Activated naive CD4-positive, alpha-beta T cell treated with anti-CD3 and anti-CD28 coated beads for 36 hours (primary cell): ENCODE measurements at regions of chr4 and their contacts with region 1.

Region 1: DNA sequence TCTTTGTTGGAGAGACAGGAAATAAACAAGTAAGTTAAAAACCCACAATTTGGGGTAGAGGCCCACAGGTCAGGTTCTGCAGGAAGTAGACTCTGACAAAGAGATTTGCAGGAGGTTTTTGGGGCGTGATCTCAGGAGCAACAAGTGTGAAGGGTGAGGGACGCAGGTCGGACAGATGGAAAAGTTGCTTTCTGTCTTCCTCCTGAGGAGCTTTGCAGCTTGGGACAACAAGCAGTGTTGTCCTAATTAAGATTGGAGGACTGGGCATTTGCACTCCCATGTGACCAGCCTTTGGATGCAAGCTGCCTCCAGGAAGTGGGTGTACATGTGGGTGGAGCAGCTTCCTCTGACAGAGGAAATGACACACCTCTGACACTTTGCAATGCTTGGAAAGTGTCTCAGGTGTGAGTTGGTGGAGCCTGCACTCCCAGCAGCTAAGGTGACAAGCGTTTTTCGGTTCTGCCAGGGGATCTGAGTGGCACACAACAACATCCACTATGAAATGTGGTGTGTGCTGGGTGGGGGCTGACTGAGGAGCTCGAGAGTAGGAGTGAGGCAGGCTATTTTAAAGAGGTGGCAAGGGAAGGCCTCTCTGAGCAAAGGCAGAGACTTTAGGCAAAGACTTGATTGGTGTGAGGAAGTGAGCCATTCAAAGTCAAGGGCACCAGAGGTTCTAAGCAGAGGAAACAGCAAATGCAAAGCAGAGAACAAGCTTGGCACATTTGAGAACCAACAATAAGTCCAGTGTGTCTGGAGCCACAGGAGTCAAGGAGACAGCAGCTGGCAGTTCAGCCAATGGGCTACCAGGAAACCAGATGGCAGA is 339.8 kb upstream of the GATB start:
- DNase-seq: peak; percentile 92
- H3K4me3 Mint-ChIP-seq: peak overlapping the region; percentile 71
- H3K27ac Mint-ChIP-seq: peak overlapping the region; percentile 98
- H3K4me1 Mint-ChIP-seq: peaks cover 88% of the 10 kb centered on the region
- H3K27me3 Mint-ChIP-seq: no peaks in the 10 kb centered on the region

Region 2: DNA sequence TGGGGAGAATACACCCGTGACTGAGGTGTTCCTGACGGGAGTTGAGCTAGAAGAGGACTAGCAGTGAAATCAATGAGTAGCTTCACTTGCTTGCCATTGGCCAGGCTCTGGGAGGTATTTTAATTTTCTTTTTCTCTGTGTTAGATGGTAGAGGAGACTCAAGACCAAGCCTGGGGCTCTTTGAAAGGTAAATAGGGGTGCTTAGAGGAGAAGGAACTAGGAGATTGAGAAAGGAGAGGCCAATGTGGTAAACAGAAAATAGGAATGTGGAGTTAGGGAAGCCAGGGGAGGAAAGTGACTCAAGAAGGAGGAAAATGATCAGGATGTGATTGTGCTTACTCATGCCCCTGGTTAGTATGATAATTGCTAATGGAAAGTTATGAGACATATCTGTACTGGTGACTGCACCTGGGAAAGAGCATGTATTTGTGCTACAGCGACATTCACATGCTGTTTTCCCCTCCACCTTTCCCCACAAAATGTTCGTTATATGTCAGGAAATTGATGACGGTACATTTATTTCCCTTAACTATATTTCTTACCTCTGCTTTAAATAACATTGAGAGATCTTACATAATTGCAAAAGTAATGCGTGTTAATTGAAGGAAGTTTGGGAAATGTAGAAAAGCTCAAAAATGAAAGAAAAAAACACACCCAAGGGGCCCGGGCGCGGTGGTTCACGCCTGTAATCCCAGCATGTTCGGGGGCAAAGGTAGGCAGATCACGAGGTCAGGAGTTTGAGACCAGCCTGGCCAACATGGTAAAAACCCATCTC is 1068.6 kb before region 1 on chr4:
- CTCF ChIA-PET with region 1: no interaction called
- intact Hi-C with region 1: loop called (anchors 5 kb)
- DNase-seq: peak; percentile 44
- H3K4me3 Mint-ChIP-seq: peak overlapping the region; percentile 35
- H3K27ac Mint-ChIP-seq: peak overlapping the region; percentile 85
- H3K4me1 Mint-ChIP-seq: peaks cover 40% of the 10 kb centered on the region
- H3K27me3 Mint-ChIP-seq: no peaks in the 10 kb centered on the region

Region 3: GRCh38 chr4:152014280-152014679 is 86.3 kb before region 1 on chr4:
- CTCF ChIA-PET with region 1: no interaction called
- intact Hi-C with region 1: loop called (anchors 1 kb)
- DNase-seq: peak; percentile 81
- H3K4me3 Mint-ChIP-seq: no peak overlapping the region
- H3K27ac Mint-ChIP-seq: no peak overlapping the region
- H3K4me1 Mint-ChIP-seq: peaks cover 49% of the 10 kb centered on the region
- H3K27me3 Mint-ChIP-seq: no peaks in the 10 kb centered on the region

Region 4: DNA sequence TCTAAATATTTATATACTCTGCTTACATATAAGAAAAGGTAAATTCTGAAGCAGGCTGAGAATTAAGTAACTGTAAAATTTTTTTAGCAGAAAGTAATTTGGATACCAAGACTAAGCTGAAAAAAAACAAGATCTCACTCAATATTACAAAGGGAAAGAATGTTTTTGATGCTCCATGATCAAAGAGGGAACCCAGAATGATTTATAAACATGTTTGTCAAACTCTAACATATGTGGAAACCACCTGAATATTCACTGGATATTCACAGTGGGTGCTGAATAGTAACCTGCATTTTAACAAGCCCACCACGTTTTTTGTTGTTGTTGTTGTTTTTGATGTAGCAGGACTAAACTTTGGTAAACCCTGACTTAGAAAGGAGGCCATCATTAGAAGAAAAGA is 14.9 kb before region 1 on chr4:
- CTCF ChIA-PET with region 1: interaction called, 4 read pairs
- intact Hi-C with region 1: loop called (anchors 1 kb)
- DNase-seq: no peak
- H3K4me3 Mint-ChIP-seq: no peak overlapping the region
- H3K27ac Mint-ChIP-seq: no peak overlapping the region
- H3K4me1 Mint-ChIP-seq: peaks cover 61% of the 10 kb centered on the region
- H3K27me3 Mint-ChIP-seq: no peaks in the 10 kb centered on the region

Region 5: DNA sequence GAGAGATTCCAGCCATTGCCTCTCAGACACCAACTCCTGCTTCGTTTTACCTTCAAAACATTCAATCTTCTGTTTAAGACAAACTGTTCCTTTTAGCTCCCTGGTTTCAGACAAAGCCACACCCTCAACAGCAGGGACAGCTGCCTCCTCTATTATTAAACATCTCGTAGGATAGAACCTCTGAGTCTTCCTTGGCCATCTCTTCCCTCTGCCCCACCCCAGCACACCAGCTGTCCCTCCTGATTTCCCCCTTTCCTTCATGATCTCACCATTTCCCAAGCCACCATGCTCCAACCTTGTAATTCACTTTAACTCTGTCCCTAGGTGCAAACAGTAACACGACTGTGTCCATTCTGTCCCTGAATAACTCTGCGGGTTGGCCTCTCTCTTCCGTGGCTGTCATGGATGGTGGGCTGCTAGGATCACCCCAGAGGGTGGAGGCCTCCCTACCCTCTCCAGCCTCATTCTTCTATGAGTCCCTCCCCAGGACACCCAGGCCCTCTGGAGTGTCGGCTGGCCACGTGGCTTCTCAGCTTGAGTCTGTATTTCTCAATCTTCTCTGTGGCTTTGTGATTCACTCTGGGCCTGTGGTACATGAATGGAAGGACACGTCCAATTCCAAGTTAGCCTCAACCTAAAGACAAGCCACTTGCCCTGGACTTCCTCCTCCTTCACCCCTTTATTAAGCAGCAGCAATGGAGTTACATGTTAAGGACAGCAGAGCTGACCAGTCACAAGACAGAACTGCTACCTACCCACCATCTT is 85.4 kb after region 1 on chr4:
- CTCF ChIA-PET with region 1: no interaction called
- intact Hi-C with region 1: loop called (anchors 1 kb)
- DNase-seq: no peak
- H3K4me3 Mint-ChIP-seq: no peak overlapping the region
- H3K27ac Mint-ChIP-seq: no peak overlapping the region
- H3K4me1 Mint-ChIP-seq: peaks cover 38% of the 10 kb centered on the region
- H3K27me3 Mint-ChIP-seq: no peaks in the 10 kb centered on the region

Region 6: GRCh38 chr4:152255437-152256011 is 154.9 kb after region 1 on chr4:
- CTCF ChIA-PET with region 1: no interaction called
- intact Hi-C with region 1: loop called (anchors 2 kb)
- DNase-seq: peak; percentile 81
- H3K4me3 Mint-ChIP-seq: no peak overlapping the region
- H3K27ac Mint-ChIP-seq: no peak overlapping the region
- H3K4me1 Mint-ChIP-seq: peaks cover 17% of the 10 kb centered on the region
- H3K27me3 Mint-ChIP-seq: no peaks in the 10 kb centered on the region